CD8-positive, alpha-beta T cell (primary cell): ENCODE measurements at regions of chr2 and their contacts with region 1.

Region 1: DNA sequence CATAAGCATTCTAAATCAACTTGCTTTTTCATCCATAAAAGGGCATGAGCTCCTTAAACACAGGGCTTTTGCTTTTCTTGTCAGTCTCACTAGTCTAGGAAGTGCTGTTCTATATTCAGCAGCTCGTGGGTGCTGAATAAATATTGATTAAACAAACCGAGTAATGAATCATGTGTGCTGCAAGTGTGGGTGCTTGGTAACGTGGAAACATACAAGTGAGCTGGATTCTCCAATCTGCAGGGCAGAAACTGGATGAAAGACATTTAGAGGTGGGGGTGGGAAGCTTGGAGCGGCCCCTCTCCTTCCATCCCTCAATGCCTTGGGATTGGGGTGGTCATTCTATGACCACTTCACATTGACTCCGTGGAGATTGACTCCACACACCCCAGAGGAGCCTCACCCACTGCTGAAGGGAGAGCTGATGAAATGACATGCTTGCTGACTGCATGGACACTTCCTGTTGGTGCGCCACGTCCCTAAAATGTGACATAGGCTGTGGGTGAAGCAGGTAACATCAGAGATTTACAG is 114.6 kb downstream of the DOCK10 start:
- DNase-seq: peak; percentile 39 to 93 (median 65)
- ATAC-seq: peak; percentile 81
- H3K4me3 ChIP-seq: no peak overlapping the region
- H3K4me3 Mint-ChIP-seq: peak overlapping the region; percentile 62
- H3K27ac ChIP-seq: peak overlapping the region; percentile 77 to 84
- H3K27ac Mint-ChIP-seq: peak overlapping the region; percentile 99
- H3K4me1 ChIP-seq: peaks cover 94% of the 10 kb centered on the region
- H3K4me1 Mint-ChIP-seq: peaks cover 97% of the 10 kb centered on the region
- H3K27me3 ChIP-seq: no peaks in the 10 kb centered on the region
- H3K27me3 Mint-ChIP-seq: no peaks in the 10 kb centered on the region
- CTCF ChIP-seq: no peak

Region 2: GRCh38 chr2:224885836-224886547 is 41.7 kb before region 1 on chr2:
- CTCF ChIA-PET with region 1: no interaction called
- POLR2A ChIA-PET with region 1: interaction called, 3 read pairs
- intact Hi-C with region 1: loop called (anchors 5 kb)
- DNase-seq: peak in 1 of 9 experiments; percentile 18
- ATAC-seq: no peak
- H3K4me3 ChIP-seq: no peak overlapping the region
- H3K4me3 Mint-ChIP-seq: no peak overlapping the region
- H3K27ac ChIP-seq: peak overlapping the region in 1 of 2 experiments; percentile 12
- H3K27ac Mint-ChIP-seq: peak overlapping the region; percentile 84
- H3K4me1 ChIP-seq: peaks cover 11% of the 10 kb centered on the region
- H3K4me1 Mint-ChIP-seq: peaks cover 46% of the 10 kb centered on the region
- H3K27me3 ChIP-seq: no peaks in the 10 kb centered on the region
- H3K27me3 Mint-ChIP-seq: no peaks in the 10 kb centered on the region
- CTCF ChIP-seq: no peak

Region 3: DNA sequence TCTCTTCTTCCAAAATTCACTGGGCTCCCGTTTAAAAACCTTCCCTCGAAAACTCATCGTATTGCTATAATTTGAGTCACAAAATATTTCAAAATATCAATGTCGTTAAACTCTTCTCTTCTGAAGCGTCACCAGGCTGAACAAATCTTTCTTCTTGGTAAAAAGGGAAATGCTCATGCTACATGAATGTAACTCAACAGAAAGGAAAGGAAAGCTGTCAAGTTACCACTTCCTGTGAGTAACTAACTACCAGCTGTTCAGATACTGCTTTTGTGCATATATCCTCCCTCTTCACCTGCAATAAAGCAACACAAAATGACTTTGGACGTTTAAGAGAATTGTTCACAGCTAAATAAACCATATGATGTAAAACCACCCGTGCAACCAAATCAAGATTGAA is 19.2 kb after region 1 on chr2:
- CTCF ChIA-PET with region 1: interaction called, 21 read pairs
- POLR2A ChIA-PET with region 1: interaction called, 25 read pairs
- intact Hi-C with region 1: loop called (anchors 1 to 2 kb)
- DNase-seq: peak in 2 of 9 experiments; percentile 64 to 84
- ATAC-seq: peak; percentile 78
- H3K4me3 ChIP-seq: peak overlapping the region; percentile 59 to 76
- H3K4me3 Mint-ChIP-seq: peak overlapping the region; percentile 89
- H3K27ac ChIP-seq: peak overlapping the region; percentile 72 to 81
- H3K27ac Mint-ChIP-seq: peak overlapping the region; percentile 97
- H3K4me1 ChIP-seq: peaks cover 73% of the 10 kb centered on the region
- H3K4me1 Mint-ChIP-seq: peaks cover 76% of the 10 kb centered on the region
- H3K27me3 ChIP-seq: no peaks in the 10 kb centered on the region
- H3K27me3 Mint-ChIP-seq: no peaks in the 10 kb centered on the region
- CTCF ChIP-seq: no peak